MCF 10A (cell line): ENCODE measurements at regions of chr6 and their contacts with region 1.

Region 1: DNA sequence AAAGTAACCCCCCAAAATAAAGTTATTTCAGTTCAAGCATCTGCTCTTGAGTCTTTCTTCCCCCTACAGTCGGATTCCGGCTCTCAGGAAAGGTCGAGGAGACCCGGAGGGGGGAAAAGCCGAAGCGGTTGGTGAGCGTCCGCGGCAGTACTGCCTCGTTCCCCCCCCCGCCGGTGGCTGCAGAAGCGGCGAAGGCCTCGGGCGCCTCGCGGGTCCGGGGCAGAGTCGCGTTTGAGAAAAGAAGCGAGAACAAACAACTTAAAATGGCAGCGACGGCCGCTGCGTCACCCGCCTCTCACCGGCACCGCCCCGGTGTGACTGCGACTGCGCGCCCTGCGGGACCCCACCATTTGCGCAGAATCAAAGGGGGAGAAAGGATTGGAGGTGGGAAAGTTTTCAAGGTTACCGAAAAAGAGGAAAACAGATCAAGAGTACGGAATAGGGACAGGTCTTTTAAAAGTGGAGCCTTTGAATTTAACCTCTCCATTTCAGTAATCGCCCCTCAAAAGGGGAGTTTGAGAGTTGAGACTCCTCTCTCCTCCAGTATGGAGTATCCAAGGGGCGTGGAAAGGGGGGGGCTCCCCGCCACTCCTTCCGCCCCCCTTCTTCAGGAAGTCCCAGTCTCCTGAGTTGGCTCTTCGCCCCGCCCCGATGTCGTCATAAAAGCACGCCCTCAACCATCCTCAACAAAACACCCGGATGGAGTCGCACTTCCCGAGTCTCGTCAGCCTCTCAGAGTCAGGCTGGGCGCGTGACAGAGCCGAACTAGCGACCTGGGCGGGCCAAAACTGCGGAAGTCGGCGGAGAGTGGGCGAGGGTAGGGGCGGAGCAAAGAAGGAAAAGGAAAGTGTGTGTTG is 1.9 kb upstream of the C6orf62 start:
- DNase-seq: peak; percentile 100
- H3K4me3 Mint-ChIP-seq: peak overlapping the region; percentile 82
- H3K27ac Mint-ChIP-seq: peak overlapping the region; percentile 100
- H3K4me1 Mint-ChIP-seq: peaks cover 7% of the 10 kb centered on the region
- H3K27me3 Mint-ChIP-seq: no peaks in the 10 kb centered on the region
- CTCF ChIP-seq: no peak

Region 2: GRCh38 chr6:24699521-24700359 is 21.1 kb before region 1 on chr6:
- CTCF ChIA-PET with region 1: no interaction called
- POLR2A ChIA-PET with region 1: interaction called, 58 read pairs
- intact Hi-C with region 1: no loop called
- DNase-seq: no peak
- H3K4me3 Mint-ChIP-seq: no peak overlapping the region
- H3K27ac Mint-ChIP-seq: no peak overlapping the region
- H3K4me1 Mint-ChIP-seq: peaks cover 9% of the 10 kb centered on the region
- H3K27me3 Mint-ChIP-seq: no peaks in the 10 kb centered on the region
- CTCF ChIP-seq: no peak

Region 3: DNA sequence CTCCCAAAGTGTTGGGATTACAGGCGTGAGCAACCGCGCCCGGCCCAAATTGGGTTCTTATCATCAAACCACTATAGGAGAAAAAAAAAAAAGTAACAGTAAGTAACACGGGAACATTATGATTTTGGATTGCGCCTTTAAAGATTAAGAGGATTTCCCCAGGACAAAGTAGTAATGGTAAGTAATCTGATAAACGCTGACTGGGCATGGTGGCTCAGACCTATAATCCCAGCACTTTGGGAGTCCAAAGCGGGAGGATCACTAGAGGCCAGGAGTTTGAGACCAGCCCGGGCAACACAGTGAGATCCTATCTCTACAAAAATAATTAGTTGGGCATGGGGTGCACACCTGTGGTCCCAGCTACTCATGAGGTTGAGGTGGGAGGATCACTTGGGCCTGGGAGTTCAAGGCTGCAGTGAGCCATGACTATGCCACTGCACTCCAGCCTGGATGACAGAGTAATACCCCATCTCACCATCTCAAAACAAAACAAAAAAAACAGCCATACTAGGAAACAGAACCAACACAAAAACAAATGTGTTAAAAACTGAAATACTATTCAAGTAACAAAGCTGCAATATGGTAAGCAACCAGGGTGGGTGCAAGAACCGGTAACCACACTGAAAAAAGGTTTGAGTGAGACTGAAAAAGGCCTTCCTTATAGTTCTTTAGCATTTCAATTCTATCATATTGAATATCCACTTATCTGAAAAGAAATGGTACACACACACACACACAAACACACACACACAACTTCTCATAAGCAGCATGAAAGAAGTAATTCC is 10.1 kb before region 1 on chr6:
- CTCF ChIA-PET with region 1: interaction called, 4 read pairs
- POLR2A ChIA-PET with region 1: interaction called, 58 read pairs
- intact Hi-C with region 1: no loop called
- DNase-seq: no peak
- H3K4me3 Mint-ChIP-seq: no peak overlapping the region
- H3K27ac Mint-ChIP-seq: no peak overlapping the region
- H3K4me1 Mint-ChIP-seq: peaks cover 33% of the 10 kb centered on the region
- H3K27me3 Mint-ChIP-seq: no peaks in the 10 kb centered on the region
- CTCF ChIP-seq: no peak

Region 4: GRCh38 chr6:24743265-24743943 is 22.6 kb after region 1 on chr6:
- CTCF ChIA-PET with region 1: interaction called, 9 read pairs
- POLR2A ChIA-PET with region 1: interaction called, 145 read pairs
- intact Hi-C with region 1: loop called (anchors 1 kb)
- DNase-seq: peak; percentile 94
- H3K4me3 Mint-ChIP-seq: peak overlapping the region; percentile 46
- H3K27ac Mint-ChIP-seq: peak overlapping the region; percentile 74
- H3K4me1 Mint-ChIP-seq: peaks cover 29% of the 10 kb centered on the region
- H3K27me3 Mint-ChIP-seq: no peaks in the 10 kb centered on the region
- CTCF ChIP-seq: no peak

Region 5: DNA sequence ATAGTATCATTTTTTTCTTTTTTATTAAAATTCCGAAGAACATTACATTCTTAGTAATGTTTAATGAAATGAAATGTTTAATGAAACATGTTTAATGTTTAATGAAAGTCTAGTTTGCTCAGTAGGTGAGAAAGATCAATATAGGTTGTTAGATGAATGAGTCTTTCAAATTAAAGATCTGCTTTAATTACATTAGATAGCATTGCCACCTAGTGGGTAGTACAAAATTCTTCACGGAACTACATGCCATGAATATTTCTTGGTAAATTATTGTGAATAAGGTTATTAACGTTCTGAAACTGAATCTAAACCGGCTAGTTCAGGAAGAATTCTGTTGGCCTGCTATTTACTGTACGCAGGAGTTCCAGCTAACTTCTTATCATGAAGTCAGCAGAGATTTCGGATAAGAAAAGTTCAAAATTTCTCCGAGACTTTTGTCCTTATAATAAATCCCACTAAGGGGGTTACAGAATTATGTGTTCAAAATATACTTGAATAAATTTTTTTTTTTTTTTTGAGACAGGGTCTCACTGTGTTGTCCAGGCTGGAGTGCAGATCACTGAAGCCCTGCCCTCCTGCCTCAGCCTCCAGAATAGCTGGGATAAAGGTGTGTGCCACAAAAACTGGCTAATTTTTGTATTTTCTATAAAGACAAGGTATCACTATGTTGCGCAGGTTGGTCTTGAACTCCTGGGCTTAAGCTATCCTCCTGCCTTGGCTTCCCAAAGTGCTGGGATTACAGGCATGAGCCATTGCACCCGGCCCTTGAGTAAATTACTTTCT is 46.0 kb after region 1 on chr6:
- CTCF ChIA-PET with region 1: interaction called, 14 read pairs
- POLR2A ChIA-PET with region 1: interaction called, 21 read pairs
- intact Hi-C with region 1: loop called (anchors 1 kb)
- DNase-seq: peak; percentile 45
- H3K4me3 Mint-ChIP-seq: no peak overlapping the region
- H3K27ac Mint-ChIP-seq: no peak overlapping the region
- H3K4me1 Mint-ChIP-seq: peaks cover 11% of the 10 kb centered on the region
- H3K27me3 Mint-ChIP-seq: no peaks in the 10 kb centered on the region
- CTCF ChIP-seq: peak; percentile 58

Region 6: DNA sequence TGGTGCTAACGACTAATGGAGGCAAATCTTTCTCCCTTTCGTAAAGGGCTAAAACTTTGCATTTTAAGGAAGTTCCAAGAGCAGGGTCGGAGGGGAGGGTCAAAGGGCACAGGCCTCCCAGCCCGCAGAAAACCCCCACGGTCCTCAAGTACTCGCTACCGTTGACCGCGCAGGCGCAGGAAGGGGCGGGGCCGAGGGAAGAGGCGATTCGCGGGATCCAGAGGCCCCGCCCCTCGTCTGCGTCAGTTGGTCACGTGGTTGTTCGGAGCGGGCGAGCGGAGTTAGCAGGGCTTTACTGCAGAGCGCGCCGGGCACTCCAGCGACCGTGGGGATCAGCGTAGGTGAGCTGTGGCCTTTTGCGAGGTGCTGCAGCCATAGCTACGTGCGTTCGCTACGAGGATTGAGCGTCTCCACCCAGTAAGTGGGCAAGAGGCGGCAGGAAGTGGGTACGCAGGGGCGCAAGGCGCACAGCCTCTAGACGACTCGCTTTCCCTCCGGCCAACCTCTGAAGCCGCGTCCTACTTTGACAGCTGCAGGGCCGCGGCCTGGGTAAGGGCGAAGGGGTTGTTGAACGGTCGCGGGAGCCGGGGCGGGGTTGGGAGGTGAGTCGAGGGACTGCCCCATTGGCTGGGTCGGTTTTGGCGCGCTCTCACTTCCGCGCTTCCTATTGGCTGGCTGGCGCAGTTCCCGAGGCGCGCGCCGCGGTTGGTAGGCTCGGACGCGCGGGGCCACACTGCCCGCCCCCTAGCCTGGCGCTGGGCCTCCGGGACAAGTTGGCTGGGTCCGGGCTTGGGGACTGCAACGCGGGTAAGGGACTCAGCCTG is 54.1 kb after region 1 on chr6 and contains the start of gene GMNN:
- CTCF ChIA-PET with region 1: interaction called, 3 read pairs
- POLR2A ChIA-PET with region 1: interaction called, 32 read pairs
- intact Hi-C with region 1: loop called (anchors 2 kb)
- DNase-seq: peak; percentile 96
- H3K4me3 Mint-ChIP-seq: peak within 1 kb of the TSS; percentile 98
- H3K27ac Mint-ChIP-seq: peak within 1 kb of the TSS; percentile 64
- H3K4me1 Mint-ChIP-seq: peaks cover 18% of the 10 kb centered on the region
- H3K27me3 Mint-ChIP-seq: no peaks in the 10 kb centered on the region
- CTCF ChIP-seq: no peak
- total RNA-seq, gene GMNN: 12.5 and 22.4 TPM in 2 replicates

Region 7: GRCh38 chr6:24809728-24810127 is 88.9 kb after region 1 on chr6:
- CTCF ChIA-PET with region 1: no interaction called
- POLR2A ChIA-PET with region 1: no interaction called
- intact Hi-C with region 1: no loop called
- DNase-seq: no peak
- H3K4me3 Mint-ChIP-seq: no peak overlapping the region
- H3K27ac Mint-ChIP-seq: no peak overlapping the region
- H3K4me1 Mint-ChIP-seq: no peaks in the 10 kb centered on the region
- H3K27me3 Mint-ChIP-seq: no peaks in the 10 kb centered on the region
- CTCF ChIP-seq: no peak

Region 8: GRCh38 chr6:24827162-24827561 is 106.3 kb after region 1 on chr6:
- CTCF ChIA-PET with region 1: no interaction called
- POLR2A ChIA-PET with region 1: interaction called, 11 read pairs
- intact Hi-C with region 1: no loop called
- DNase-seq: peak; percentile 64
- H3K4me3 Mint-ChIP-seq: no peak overlapping the region
- H3K27ac Mint-ChIP-seq: peak overlapping the region; percentile 59
- H3K4me1 Mint-ChIP-seq: peaks cover 18% of the 10 kb centered on the region
- H3K27me3 Mint-ChIP-seq: no peaks in the 10 kb centered on the region
- CTCF ChIP-seq: no peak